GM12878 (cell line): ENCODE measurements at regions of chr1 and their contacts with region 1.

Region 1: DNA sequence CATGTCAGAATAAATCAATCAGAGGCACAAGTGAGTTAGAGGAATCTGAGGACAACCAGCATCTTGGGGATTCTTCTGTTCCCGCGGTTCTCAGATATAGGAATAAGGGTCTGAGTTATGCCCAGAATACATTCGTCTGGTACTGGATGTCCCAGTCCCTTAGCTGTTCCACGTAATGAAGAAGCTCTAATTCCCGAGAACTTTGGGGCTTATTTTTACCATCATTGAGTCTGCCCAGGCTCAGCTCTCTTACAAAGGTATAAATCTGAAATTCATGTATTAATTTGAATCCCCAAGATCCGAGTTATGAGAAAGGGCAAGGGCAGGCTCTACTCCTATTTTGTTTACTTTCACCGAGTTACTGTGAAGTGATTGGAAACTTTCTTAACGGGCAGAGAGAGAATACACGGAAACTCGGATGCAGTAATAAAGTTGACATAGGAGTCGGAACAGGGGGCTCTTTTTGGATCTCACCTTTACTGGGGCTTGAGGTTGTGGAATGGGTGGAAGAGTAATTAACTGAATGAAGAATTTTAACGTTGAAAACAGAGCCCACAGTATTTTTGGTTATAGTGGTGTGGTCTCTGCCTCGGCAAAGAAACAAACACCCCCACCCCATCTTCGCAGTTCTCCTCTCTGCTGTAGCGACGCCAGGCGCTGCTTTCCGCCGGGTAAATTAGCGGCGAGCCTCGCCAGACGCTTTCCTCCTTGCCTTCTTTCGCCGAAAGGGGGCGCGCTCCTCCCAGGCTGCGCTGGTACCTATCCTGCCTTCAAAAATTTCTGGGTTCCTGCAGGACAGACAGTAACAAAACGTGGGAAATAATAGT is 7.1 kb downstream of the PRRX1 start:
- DNase-seq: no peak
- ATAC-seq: peak; percentile 74
- H3K4me3 ChIP-seq: no peak overlapping the region
- H3K27ac ChIP-seq: no peak overlapping the region
- H3K4me1 ChIP-seq: no peaks in the 10 kb centered on the region
- H3K27me3 ChIP-seq: peaks cover 3 to 13% of the 10 kb centered on the region in 2 experiments; a peak in 3 of 4 replicates
- CTCF ChIP-seq: peak; percentile 54 to 65 (median 55)
- EP300 ChIP-seq: no peak
- POLR2A ChIP-seq: no peak
- RAD21 ChIP-seq: peak; percentile 51

Region 2: GRCh38 chr1:169928438-169929209 is 742.4 kb before region 1 on chr1:
- CTCF ChIA-PET with region 1: no interaction called
- POLR2A ChIA-PET with region 1: no interaction called
- RAD21 ChIA-PET with region 1: interaction called, 3 read pairs
- SMC1A ChIA-PET with region 1: no interaction called
- in situ Hi-C with region 1: loop called (anchors 10 kb)
- intact Hi-C with region 1: no loop called
- DNase-seq: no peak
- ATAC-seq: peak; percentile 82
- H3K4me3 ChIP-seq: no peak overlapping the region
- H3K27ac ChIP-seq: no peak overlapping the region
- H3K4me1 ChIP-seq: peaks cover 6% of the 10 kb centered on the region
- H3K27me3 ChIP-seq: no peaks in the 10 kb centered on the region
- CTCF ChIP-seq: peak; percentile 53 to 73 (median 70)
- EP300 ChIP-seq: no peak
- POLR2A ChIP-seq: no peak
- RAD21 ChIP-seq: peak; percentile 88

Region 3: DNA sequence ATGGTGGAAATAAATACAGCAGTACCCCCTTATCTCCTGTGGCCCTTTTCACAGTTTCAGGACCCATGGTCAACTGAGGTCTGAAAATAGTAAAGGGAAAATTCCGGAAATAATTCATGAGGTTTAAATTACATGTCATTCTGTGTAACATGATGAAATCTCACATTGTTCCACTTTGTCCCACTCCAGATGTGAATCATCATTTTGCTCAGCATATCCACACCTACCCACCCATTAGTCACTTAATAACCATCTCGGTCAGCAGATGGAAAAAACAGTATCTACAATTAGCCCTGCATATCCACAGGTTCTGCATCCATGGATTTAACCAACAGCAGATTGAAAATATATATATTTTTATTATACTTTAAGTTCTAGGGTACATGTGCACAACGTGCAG is 225.9 kb before region 1 on chr1:
- CTCF ChIA-PET with region 1: no interaction called
- POLR2A ChIA-PET with region 1: no interaction called
- RAD21 ChIA-PET with region 1: no interaction called
- SMC1A ChIA-PET with region 1: no interaction called
- in situ Hi-C with region 1: no loop called
- intact Hi-C with region 1: no loop called
- DNase-seq: no peak
- ATAC-seq: no peak
- H3K4me3 ChIP-seq: no peak overlapping the region
- H3K27ac ChIP-seq: no peak overlapping the region
- H3K4me1 ChIP-seq: no peaks in the 10 kb centered on the region
- H3K27me3 ChIP-seq: no peaks in the 10 kb centered on the region
- CTCF ChIP-seq: no peak
- EP300 ChIP-seq: no peak
- POLR2A ChIP-seq: no peak
- RAD21 ChIP-seq: no peak

Region 4: GRCh38 chr1:170471398-170472053 is 199.5 kb before region 1 on chr1:
- CTCF ChIA-PET with region 1: no interaction called
- POLR2A ChIA-PET with region 1: no interaction called
- RAD21 ChIA-PET with region 1: no interaction called
- SMC1A ChIA-PET with region 1: no interaction called
- in situ Hi-C with region 1: no loop called
- intact Hi-C with region 1: no loop called
- DNase-seq: no peak
- ATAC-seq: no peak
- H3K4me3 ChIP-seq: no peak overlapping the region
- H3K27ac ChIP-seq: no peak overlapping the region
- H3K4me1 ChIP-seq: no peaks in the 10 kb centered on the region
- H3K27me3 ChIP-seq: no peaks in the 10 kb centered on the region
- CTCF ChIP-seq: no peak
- EP300 ChIP-seq: no peak
- POLR2A ChIP-seq: no peak
- RAD21 ChIP-seq: no peak

Region 5: GRCh38 chr1:170698301-170699275 is 27.6 kb after region 1 on chr1:
- CTCF ChIA-PET with region 1: interaction called, 7 read pairs
- POLR2A ChIA-PET with region 1: interaction called, 3 read pairs
- RAD21 ChIA-PET with region 1: no interaction called
- SMC1A ChIA-PET with region 1: interaction called, 10 read pairs
- in situ Hi-C with region 1: no loop called
- intact Hi-C with region 1: no loop called
- DNase-seq: no peak
- ATAC-seq: no peak
- H3K4me3 ChIP-seq: no peak overlapping the region
- H3K27ac ChIP-seq: no peak overlapping the region
- H3K4me1 ChIP-seq: no peaks in the 10 kb centered on the region
- H3K27me3 ChIP-seq: no peaks in the 10 kb centered on the region; a peak in 1 of 4 replicates
- CTCF ChIP-seq: no peak
- EP300 ChIP-seq: no peak
- POLR2A ChIP-seq: no peak
- RAD21 ChIP-seq: no peak